ENCODE measurements at regions of chr5 and their contacts with region 1.

Region 1: DNA sequence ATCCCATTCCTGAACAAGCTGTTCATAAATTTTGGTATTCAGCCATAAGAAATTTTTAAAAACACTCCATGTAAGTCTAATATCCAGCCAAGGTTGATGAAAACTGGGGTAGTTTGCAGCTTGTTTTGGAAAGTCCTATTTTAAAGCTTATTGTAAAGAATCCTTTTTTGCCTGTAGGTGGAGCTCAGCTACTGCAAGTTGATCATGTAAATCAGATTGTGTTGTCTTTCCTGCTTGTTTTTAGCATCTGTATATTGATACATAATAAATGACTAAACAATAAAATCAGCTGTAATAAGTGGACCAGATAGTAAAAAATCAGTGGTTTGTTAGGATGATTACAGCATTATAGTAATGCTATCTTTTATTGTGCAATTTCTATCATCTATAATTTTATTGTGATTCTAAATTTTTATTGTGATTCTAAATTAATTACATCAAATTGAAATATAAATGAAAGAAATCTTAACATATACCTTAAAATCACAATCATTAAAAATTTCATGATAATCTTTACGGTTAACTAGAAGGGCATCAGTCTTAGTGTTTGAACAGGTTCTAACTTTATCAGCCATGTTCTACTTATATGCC is 42.4 kb downstream of the CWC27 start:
- DNase-seq: peak; percentile 65
- H3K4me3 ChIP-seq: no peak overlapping the region
- H3K27ac ChIP-seq: no peak overlapping the region
- H3K4me1 ChIP-seq: no peaks in the 10 kb centered on the region
- H3K27me3 ChIP-seq: no peaks in the 10 kb centered on the region
- CTCF ChIP-seq: peak; percentile 47
- POLR2A ChIP-seq: no peak

Region 2: DNA sequence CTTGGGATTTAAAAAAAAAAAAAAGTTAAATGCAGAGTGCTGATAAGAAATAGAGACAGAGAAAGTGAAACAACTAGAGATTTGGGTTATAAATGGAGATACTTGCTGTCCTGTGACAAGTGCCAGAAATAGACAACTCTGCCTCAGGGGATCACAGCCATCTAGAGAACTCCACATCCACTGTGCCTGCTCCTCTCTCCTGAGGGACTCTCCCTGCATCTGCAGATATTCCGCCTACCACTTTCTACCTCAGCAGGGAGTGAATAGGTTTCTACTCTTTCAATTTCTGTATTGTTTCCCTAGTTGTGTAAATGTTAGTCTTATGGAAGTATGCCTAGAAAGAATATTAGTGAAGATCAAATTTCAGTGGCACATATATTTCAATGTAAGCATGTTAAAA is 1156.1 kb before region 1 on chr5:
- CTCF ChIA-PET with region 1: no interaction called
- POLR2A ChIA-PET with region 1: no interaction called
- dilution Hi-C with region 1: no loop called
- intact Hi-C with region 1: no loop called
- DNase-seq: no peak
- H3K4me3 ChIP-seq: no peak overlapping the region
- H3K27ac ChIP-seq: no peak overlapping the region
- H3K4me1 ChIP-seq: no peaks in the 10 kb centered on the region
- H3K27me3 ChIP-seq: no peaks in the 10 kb centered on the region
- CTCF ChIP-seq: no peak
- POLR2A ChIP-seq: no peak

Region 3: GRCh38 chr5:64958757-64959391 is 147.7 kb after region 1 on chr5:
- CTCF ChIA-PET with region 1: interaction called, 37 read pairs
- POLR2A ChIA-PET with region 1: no interaction called
- dilution Hi-C with region 1: no loop called
- intact Hi-C with region 1: loop called (anchors 2 kb)
- DNase-seq: peak; percentile 43
- H3K4me3 ChIP-seq: no peak overlapping the region
- H3K27ac ChIP-seq: no peak overlapping the region
- H3K4me1 ChIP-seq: no peaks in the 10 kb centered on the region
- H3K27me3 ChIP-seq: no peaks in the 10 kb centered on the region
- CTCF ChIP-seq: peak; percentile 27 to 39
- POLR2A ChIP-seq: no peak

Region 4: GRCh38 chr5:65035211-65036206 is 224.4 kb after region 1 on chr5:
- CTCF ChIA-PET with region 1: interaction called, 22 read pairs
- POLR2A ChIA-PET with region 1: no interaction called
- dilution Hi-C with region 1: no loop called
- intact Hi-C with region 1: loop called (anchors 5 kb)
- DNase-seq: peak; percentile 95
- H3K4me3 ChIP-seq: peak overlapping the region; percentile 60 to 69 (median 63)
- H3K27ac ChIP-seq: peak overlapping the region; percentile 97
- H3K4me1 ChIP-seq: peaks cover 23% of the 10 kb centered on the region
- H3K27me3 ChIP-seq: no peaks in the 10 kb centered on the region
- CTCF ChIP-seq: no peak
- POLR2A ChIP-seq: peak; percentile 89

Region 5: GRCh38 chr5:65262649-65263059 is 451.5 kb after region 1 on chr5:
- CTCF ChIA-PET with region 1: interaction called, 13 read pairs
- POLR2A ChIA-PET with region 1: no interaction called
- dilution Hi-C with region 1: no loop called
- intact Hi-C with region 1: no loop called
- DNase-seq: peak; percentile 76
- H3K4me3 ChIP-seq: peak overlapping the region in 1 of 3 experiments; percentile 29
- H3K27ac ChIP-seq: peak overlapping the region; percentile 62
- H3K4me1 ChIP-seq: peaks cover 28% of the 10 kb centered on the region
- H3K27me3 ChIP-seq: no peaks in the 10 kb centered on the region
- CTCF ChIP-seq: no peak
- POLR2A ChIP-seq: no peak

Region 6: DNA sequence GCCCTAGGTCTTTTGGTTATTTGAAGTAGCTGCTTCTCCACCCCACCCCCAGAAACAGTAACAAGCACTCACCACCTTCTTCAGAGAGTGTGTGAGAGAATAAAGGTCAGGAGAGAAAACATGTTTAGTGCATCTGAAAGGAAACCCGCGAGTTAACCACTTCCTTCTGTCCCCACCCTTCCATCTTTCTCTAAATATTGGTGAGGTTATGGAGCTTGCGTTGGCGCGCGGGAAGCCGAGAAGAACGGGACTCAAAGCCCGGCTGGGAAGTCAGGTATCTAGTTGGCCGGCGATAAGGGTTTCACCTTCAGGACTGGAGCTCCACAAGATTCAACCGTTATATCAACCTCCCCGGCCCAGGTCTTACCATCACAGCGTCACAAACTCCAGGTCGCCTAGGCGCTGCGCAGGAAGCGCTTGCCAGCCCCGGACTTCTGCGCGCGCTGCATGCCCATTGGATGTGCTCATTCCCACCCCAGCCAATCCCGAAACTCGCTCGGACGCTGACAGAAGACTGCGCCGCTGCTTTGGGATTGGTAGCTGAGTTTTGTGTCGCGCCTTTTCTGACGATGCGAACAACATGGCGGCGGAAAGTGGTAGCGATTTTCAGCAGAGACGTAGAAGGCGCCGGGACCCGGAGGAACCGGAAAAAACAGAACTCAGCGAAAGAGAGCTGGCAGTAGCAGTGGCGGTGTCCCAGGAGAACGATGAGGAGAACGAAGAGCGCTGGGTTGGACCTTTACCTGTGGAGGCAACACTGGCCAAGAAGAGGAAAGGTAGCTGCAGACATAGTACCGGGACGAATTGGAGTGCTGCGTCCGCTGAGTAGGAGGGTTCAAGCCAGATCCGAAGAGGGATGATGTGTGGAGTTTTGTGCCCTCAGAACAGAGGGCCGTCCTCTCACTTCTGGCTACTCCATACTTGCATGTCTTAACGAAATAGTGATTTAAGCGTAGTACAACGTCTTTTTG is 751.9 kb after region 1 on chr5 and contains the starts of genes CENPK and PPWD1:
- CTCF ChIA-PET with region 1: interaction called, 16 read pairs
- POLR2A ChIA-PET with region 1: no interaction called
- dilution Hi-C with region 1: no loop called
- intact Hi-C with region 1: no loop called
- DNase-seq: peak; percentile 98
- H3K4me3 ChIP-seq: peak within 1 kb of the TSS; percentile 49 to 85 (median 72)
- H3K27ac ChIP-seq: peak within 1 kb of the TSS; percentile 71
- H3K4me1 ChIP-seq: peaks cover 25% of the 10 kb centered on the region
- H3K27me3 ChIP-seq: no peaks in the 10 kb centered on the region
- CTCF ChIP-seq: no peak
- POLR2A ChIP-seq: no peak
- total RNA-seq, gene CENPK: 49.3 and 50.7 TPM in 2 replicates
- total RNA-seq, gene PPWD1: 40.9 and 41.9 TPM in 2 replicates

Measured in endothelial cell of umbilical vein (primary cell).